ENCODE measurements at regions of chr18 and their contacts with region 1.

Region 1: DNA sequence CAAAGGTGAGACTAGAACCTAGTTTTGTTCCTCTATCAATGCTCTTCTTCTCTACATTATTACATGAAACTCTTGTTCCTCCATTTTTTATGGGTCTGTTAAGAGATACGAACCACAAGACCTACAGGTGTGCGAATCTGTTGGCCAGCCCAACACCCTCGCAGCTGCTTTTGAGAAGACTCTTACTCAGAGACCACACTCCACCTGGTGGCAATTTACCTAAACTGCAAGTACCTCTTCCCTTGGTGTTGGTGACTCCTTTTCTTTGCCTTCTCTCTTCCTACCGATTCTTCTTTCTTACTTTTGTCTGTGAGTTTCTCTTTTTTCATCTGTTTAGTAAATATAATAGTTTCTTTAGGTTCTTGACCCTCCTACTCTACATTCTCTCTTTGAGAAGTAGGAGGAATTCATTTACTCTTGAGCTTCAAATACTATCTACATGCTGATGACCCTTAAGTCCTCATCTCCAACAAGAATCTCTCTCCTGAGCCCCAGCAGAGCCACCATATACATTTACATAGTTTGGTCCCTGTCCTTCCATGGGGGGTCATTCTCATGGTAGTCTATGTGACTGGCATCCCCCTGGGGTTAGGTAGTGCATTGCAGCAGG is 81.8 kb upstream of the GAREM1 start:
- DNase-seq: no peak
- ATAC-seq: peak; percentile 71
- H3K4me3 Mint-ChIP-seq: no peak overlapping the region
- H3K27ac Mint-ChIP-seq: no peak overlapping the region
- H3K4me1 Mint-ChIP-seq: no peaks in the 10 kb centered on the region
- H3K27me3 Mint-ChIP-seq: peaks cover 6% of the 10 kb centered on the region
- CTCF ChIP-seq: peak; percentile 82

Region 2: DNA sequence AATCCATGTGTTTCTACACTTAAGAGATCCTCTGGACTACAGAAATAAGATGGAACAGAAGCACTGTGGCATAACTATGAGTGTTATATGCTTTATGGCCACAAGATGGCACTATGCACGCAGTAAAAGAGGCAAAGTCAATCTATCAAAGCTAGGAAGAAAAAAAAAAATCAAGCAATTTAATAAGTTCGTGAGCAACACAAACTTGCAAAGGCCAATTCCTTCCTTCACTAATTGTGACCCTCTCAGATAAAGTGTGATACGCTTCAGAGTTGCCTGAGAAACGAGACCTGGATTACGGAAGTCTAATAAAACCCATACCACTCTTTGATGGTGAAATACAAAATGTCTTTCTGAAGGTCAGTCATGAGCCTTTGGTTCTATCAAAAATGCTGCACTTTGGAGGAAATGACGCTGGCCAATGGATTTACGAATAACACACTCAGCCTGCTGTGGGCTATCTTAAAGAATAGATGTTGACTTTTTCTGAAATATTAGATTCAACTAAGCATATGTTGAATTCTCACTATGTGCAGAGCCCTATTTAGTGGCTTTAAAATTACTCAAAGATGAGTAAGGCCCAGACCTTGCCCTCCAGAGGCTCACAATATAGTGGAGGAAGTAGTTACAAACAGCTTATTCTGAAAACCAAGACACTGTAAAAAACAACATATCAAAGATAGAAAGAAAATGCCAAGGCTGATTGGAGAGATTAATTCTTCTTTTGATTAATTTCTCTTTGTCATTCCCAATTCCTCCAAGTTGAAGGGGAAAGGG is 996.4 kb before region 1 on chr18:
- CTCF ChIA-PET with region 1: no interaction called
- POLR2A ChIA-PET with region 1: no interaction called
- intact Hi-C with region 1: loop called (anchors 1 kb)
- DNase-seq: no peak
- ATAC-seq: peak; percentile 40
- H3K4me3 Mint-ChIP-seq: no peak overlapping the region
- H3K27ac Mint-ChIP-seq: no peak overlapping the region
- H3K4me1 Mint-ChIP-seq: no peaks in the 10 kb centered on the region
- H3K27me3 Mint-ChIP-seq: peaks cover 4% of the 10 kb centered on the region
- CTCF ChIP-seq: peak; percentile 31

Region 3: DNA sequence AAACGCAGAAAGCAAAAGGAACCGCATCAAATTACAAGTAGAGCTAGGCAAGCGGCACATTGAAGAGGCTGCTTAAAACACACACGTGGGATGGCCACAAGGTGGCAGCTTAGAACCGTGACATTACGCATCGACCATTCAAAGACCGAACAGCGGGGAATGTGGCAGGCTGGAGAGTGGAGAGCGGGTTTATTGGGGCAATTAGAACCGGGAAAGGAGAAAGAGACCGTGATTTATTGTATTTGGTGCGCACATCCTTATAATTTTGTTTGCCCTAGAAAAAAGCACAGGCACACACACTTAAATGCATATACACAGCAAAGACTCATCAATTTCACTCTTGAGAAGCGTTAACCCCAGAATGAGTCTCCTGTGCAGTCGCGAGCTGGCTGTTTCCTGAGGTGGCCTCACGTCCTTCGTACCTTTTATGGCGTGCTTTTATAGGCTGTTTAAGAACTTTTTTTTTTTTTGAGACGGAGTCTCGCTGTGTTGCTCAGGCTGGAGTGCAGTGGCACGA is 394.4 kb before region 1 on chr18:
- CTCF ChIA-PET with region 1: interaction called, 112 read pairs
- POLR2A ChIA-PET with region 1: no interaction called
- intact Hi-C with region 1: loop called (anchors 1 kb)
- DNase-seq: peak; percentile 33
- ATAC-seq: peak; percentile 90
- H3K4me3 Mint-ChIP-seq: peak overlapping the region; percentile 21
- H3K27ac Mint-ChIP-seq: no peak overlapping the region
- H3K4me1 Mint-ChIP-seq: peaks cover 8% of the 10 kb centered on the region
- H3K27me3 Mint-ChIP-seq: peaks cover 7% of the 10 kb centered on the region
- CTCF ChIP-seq: peak; percentile 29

Region 4: GRCh38 chr18:32271672-32272208 is 280.8 kb before region 1 on chr18:
- CTCF ChIA-PET with region 1: no interaction called
- POLR2A ChIA-PET with region 1: no interaction called
- intact Hi-C with region 1: loop called (anchors 1 kb)
- DNase-seq: no peak
- ATAC-seq: no peak
- H3K4me3 Mint-ChIP-seq: no peak overlapping the region
- H3K27ac Mint-ChIP-seq: no peak overlapping the region
- H3K4me1 Mint-ChIP-seq: no peaks in the 10 kb centered on the region
- H3K27me3 Mint-ChIP-seq: peaks cover 2% of the 10 kb centered on the region
- CTCF ChIP-seq: no peak

Region 5: DNA sequence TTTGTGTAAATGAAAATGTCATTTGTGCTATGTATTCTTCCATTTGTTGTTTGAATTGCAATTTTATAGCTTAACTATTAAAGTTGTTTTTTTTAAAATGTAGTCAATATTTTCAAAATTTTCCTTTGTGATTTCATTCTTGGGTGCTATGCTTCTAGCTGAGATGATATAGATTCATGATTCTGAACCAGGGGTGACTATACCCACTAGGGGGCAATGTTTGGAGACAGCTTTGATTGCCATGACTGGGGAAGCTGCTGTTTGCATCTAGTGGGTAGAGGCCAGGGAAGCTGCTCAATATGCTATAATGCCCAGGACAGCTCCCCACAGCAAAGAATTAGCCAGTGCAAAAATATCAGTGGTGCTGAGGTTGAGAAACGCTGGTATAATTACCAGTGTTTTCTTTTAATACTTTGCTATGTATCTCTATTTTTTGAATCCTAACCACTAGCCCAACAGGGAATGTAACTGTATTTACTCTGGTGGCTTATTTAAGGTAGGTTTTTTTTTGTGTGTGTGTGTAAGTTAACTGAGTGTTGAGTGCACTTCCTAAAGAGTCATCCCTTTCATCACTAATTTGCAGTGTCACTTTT is 262.9 kb before region 1 on chr18:
- CTCF ChIA-PET with region 1: interaction called, 4 read pairs
- POLR2A ChIA-PET with region 1: no interaction called
- intact Hi-C with region 1: loop called (anchors 1 kb)
- DNase-seq: no peak
- ATAC-seq: no peak
- H3K4me3 Mint-ChIP-seq: no peak overlapping the region
- H3K27ac Mint-ChIP-seq: no peak overlapping the region
- H3K4me1 Mint-ChIP-seq: no peaks in the 10 kb centered on the region
- H3K27me3 Mint-ChIP-seq: peaks cover 4% of the 10 kb centered on the region
- CTCF ChIP-seq: no peak

Region 6: DNA sequence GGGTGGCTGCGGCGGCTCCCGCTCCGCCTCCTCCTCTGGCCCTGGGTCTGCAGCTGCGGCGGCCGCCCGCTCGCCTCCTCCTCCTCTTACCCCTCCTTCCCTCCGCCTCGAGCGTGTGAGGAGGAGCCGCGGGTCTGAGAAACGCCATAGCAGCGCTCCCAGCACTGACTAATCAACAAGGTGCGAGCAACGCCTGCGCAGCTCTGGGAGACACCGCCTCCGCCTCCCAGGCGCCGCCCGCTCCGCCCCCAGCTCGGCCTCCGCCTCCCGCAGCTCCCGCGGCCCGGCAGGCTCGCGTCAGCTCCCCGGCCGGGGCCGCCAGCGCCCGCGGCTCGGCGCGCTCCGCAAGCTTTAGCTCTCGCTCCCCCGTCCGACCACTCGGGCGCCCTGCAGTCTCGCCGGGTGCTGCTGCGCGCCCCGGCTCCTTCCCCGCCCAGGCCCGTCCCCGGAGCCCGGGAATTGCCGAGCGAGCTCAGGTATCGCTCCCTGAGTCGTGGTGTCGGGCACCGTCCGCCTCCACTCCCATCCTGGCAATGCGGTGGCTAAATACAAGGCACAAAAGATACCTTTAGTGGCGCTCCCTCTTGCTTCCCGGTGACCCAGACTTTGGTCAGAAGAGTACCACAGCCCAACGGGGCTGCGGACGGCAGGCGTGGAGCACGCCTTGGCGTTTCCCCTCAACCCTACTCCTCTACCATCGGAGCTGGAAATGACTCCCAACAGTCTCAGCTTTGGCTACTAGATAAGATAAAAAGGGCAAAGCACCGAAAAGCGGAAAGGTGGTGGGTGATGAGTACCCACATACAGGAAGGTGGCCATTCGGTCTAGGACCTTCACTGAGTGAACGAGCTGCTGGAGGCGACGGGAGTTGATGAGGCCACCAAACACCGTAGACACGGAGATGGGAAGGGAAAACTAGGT is 81.6 kb before region 1 on chr18 and contains the start of gene GAREM1:
- CTCF ChIA-PET with region 1: no interaction called
- POLR2A ChIA-PET with region 1: no interaction called
- intact Hi-C with region 1: loop called (anchors 2 kb)
- DNase-seq: peak; percentile 67
- ATAC-seq: peak; percentile 95
- H3K4me3 Mint-ChIP-seq: peak within 1 kb of the TSS; percentile 83
- H3K27ac Mint-ChIP-seq: no peak within 1 kb of the TSS
- H3K4me1 Mint-ChIP-seq: peaks cover 27% of the 10 kb centered on the region
- H3K27me3 Mint-ChIP-seq: peaks cover 53% of the 10 kb centered on the region
- CTCF ChIP-seq: no peak
- total RNA-seq, gene GAREM1: not detected in 2 replicates